ENCODE measurements at regions of chr7 and their contacts with region 1.

Region 1: DNA sequence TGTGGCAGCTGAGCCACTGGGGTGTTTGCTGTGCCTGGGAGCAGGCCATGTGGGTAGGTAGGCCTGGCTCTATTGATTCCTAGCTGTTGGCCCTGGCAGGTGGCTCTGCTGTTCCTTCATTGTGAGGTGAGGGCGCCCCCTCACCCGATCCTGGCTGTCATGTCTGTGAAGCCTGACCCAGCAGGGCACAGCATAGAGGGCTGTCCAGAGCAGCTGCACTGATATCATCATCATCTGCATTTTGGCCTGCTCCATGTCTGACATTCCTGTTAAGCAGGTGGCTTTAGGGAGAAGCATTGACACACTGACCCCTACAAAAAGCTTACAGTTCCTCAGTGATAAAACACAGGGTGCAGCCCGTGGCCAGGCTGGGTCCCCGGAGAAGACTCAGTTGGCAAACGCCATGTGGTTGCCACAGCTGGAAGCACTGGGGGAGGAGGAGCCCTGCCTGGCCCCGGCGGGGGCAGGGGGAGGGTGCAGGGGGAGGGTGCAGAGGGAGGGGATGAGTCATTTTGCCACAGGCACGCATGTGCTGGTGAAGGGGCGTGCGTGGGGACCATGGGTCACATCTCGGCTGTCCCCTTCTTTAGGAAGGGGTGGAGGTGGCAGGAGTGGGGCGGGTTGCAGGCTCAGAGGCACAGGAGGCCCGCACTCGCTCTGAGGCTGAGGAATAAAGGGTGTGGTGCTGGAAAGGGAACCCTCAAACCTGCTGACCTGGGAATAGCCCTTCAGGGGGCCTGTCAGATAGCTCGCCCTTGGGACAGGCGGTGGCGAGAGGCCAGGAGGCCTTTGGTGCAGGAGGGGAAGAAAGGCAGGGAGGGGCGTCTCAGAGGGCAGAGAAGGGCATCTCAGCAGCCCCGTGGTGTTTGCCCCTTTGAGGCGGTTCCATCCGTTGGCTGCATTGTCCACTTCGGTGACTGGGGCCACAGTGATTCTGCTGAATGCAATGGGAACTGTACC is 31.6 kb downstream of the IKZF1 start:
- DNase-seq: peak in 9 of 10 donors; percentile 50 to 88 (median 60)
- ATAC-seq: peak; percentile 9 to 31
- H3K4me3 Mint-ChIP-seq: no peak overlapping the region
- H3K27ac Mint-ChIP-seq: no peak overlapping the region
- H3K4me1 Mint-ChIP-seq: peaks cover 0 to 45% (median 21%) of the 10 kb centered on the region in 4 donors
- H3K27me3 Mint-ChIP-seq: no peaks in the 10 kb centered on the region

Region 2: GRCh38 chr7:50182759-50183158 is 153.3 kb before region 1 on chr7:
- POLR2A ChIA-PET with region 1: no interaction called
- DNase-seq: no peak
- ATAC-seq: no peak
- H3K4me3 Mint-ChIP-seq: no peak overlapping the region
- H3K27ac Mint-ChIP-seq: peak overlapping the region in 1 of 10 donors; percentile 9
- H3K4me1 Mint-ChIP-seq: peaks cover 2 to 13% (median 11%) of the 10 kb centered on the region in 4 donors
- H3K27me3 Mint-ChIP-seq: no peaks in the 10 kb centered on the region

Region 3: DNA sequence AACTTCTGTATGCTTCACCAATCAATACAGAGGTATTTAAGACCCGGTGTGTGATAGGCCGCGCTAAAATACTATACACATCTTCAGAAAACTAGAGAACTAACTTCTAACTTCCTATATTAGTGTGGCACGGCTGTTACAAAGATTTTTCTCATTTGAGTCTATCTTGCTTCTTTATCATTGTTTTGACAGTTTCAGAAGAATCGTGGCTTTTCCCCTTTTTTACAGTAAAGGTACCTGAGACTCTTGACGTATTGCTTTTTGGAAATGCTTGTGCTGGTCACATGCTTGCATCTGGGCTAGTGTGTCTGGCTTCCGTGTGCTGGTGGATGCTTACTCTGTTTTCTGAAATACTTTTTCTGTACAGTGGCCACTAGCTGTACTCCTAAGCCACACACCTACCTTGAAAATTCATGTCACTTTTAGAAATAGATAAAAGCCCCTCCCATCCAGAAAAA is 18.8 kb before region 1 on chr7:
- POLR2A ChIA-PET with region 1: interaction called, 1,553 read pairs
- DNase-seq: peak in 9 of 10 donors; percentile 43 to 89 (median 69)
- ATAC-seq: peak; percentile 66 to 80
- H3K4me3 Mint-ChIP-seq: peak overlapping the region; percentile 81 to 100 (median 100)
- H3K27ac Mint-ChIP-seq: peak overlapping the region in 9 of 10 donors; percentile 91 to 100 (median 99)
- H3K4me1 Mint-ChIP-seq: peaks cover 42 to 99% (median 94%) of the 10 kb centered on the region in 4 donors
- H3K27me3 Mint-ChIP-seq: no peaks in the 10 kb centered on the region

Region 4: GRCh38 chr7:50349963-50350944 is 14.2 kb after region 1 on chr7:
- POLR2A ChIA-PET with region 1: interaction called, 742 read pairs
- DNase-seq: peak in 6 of 10 donors; percentile 40 to 61 (median 53)
- ATAC-seq: peak; percentile 49 to 56
- H3K4me3 Mint-ChIP-seq: peak overlapping the region; percentile 52 to 91 (median 78)
- H3K27ac Mint-ChIP-seq: peak overlapping the region in 9 of 10 donors; percentile 94 to 100 (median 97)
- H3K4me1 Mint-ChIP-seq: peaks cover 60 to 99% (median 98%) of the 10 kb centered on the region in 4 donors
- H3K27me3 Mint-ChIP-seq: peaks cover 0 to 2% (median 0%) of the 10 kb centered on the region in 5 donors

Region 5: GRCh38 chr7:50369143-50370026 is 33.3 kb after region 1 on chr7:
- POLR2A ChIA-PET with region 1: interaction called, 742 read pairs
- DNase-seq: peak in 8 of 10 donors; percentile 49 to 86 (median 72)
- ATAC-seq: peak; percentile 44 to 66
- H3K4me3 Mint-ChIP-seq: peak overlapping the region in 9 of 10 donors; percentile 45 to 82 (median 61)
- H3K27ac Mint-ChIP-seq: peak overlapping the region in 9 of 10 donors; percentile 37 to 100 (median 89)
- H3K4me1 Mint-ChIP-seq: peaks cover 42 to 99% (median 96%) of the 10 kb centered on the region in 4 donors
- H3K27me3 Mint-ChIP-seq: no peaks in the 10 kb centered on the region

Region 6: DNA sequence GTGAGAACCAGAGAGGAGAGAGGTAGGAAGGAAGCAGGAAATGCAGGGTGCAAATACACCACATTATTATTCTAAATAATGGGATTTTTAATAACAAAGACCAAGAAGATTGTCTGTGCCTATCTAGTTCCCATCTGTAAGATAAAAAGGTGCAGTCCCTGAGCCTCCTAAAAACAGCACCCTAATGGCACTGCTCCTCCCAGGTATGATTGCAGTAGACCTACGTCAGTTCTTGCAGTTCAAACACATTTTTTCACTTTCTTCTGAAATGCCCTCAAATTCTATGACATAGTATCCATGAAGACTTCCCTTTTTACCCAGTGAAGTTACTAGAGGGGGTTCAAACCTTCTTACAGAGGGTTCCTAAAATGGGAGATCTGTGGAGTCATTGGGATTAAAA is 43.5 kb after region 1 on chr7:
- POLR2A ChIA-PET with region 1: no interaction called
- DNase-seq: no peak
- ATAC-seq: peak in 1 of 2 donors; percentile 70
- H3K4me3 Mint-ChIP-seq: peak overlapping the region in 5 of 10 donors; percentile 6 to 59 (median 14)
- H3K27ac Mint-ChIP-seq: peak overlapping the region in 9 of 10 donors; percentile 47 to 94 (median 85)
- H3K4me1 Mint-ChIP-seq: peaks cover 31 to 97% (median 95%) of the 10 kb centered on the region in 4 donors
- H3K27me3 Mint-ChIP-seq: no peaks in the 10 kb centered on the region

Region 7: DNA sequence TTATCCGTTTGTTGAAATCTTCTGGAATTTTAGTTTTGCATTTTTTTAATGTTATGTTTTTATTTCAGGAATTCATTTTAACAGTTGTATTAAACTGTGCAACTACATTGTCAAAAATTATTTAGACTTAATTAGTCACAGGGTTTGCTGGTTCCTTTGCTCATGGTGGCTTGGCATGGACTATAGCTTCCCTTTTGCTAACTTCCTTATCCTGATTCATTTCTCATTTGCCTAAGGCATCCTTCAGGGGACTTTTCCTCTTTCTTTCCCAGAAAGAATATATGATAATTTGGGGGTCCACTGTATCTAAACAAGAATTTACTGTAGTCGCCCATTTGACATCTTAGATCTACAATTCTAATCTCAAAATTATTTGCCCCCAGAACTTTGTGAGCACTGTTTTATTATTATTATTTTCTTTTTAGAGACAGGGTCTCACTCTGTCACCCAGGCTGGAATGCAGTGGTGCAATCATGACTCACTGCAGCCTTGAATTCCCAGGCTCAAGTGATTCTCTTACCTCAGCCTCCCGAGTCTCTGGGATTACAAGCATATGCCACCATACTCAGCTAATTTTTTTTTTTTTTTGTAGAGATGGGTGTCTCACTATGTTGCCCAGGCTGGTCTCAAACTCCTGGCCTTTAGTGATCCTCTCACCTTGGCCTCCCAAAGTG is 100.2 kb after region 1 on chr7:
- POLR2A ChIA-PET with region 1: no interaction called
- DNase-seq: no peak
- ATAC-seq: no peak
- H3K4me3 Mint-ChIP-seq: no peak overlapping the region
- H3K27ac Mint-ChIP-seq: no peak overlapping the region
- H3K4me1 Mint-ChIP-seq: peaks cover 0 to 2% (median 0%) of the 10 kb centered on the region in 4 donors
- H3K27me3 Mint-ChIP-seq: no peaks in the 10 kb centered on the region

Region 8: DNA sequence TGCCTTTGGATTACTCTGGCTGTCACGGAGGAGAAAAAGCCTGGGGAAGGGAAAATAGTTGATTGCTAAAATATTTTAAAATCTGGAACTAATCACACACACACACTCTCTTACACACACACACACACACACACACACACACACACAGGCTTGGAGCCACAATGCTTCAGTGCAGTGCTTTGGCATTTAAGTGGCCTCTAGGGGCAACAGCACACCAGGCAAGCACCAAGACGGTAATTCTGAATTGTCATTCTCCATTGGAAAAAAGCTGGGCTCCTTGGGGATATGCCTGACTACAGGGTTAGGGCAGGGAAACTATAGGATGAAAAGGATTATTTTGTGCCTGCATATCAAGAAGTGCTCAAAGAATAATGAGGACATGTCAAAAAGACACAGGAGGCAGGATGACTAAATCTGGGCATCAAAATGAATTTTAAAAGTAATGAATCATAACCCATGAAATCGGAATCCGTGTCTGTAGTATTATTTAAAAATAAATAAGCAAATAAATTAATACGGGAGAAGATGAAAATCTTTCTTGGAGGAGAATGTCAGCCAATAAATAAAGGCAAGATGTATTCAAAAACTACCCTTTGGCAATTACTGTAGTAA is 259.5 kb after region 1 on chr7:
- POLR2A ChIA-PET with region 1: no interaction called
- DNase-seq: no peak
- ATAC-seq: peak in 1 of 2 donors; percentile 30
- H3K4me3 Mint-ChIP-seq: no peak overlapping the region
- H3K27ac Mint-ChIP-seq: peak overlapping the region in 1 of 10 donors; percentile 73
- H3K4me1 Mint-ChIP-seq: peaks cover 0 to 7% (median 0%) of the 10 kb centered on the region in 4 donors
- H3K27me3 Mint-ChIP-seq: peaks cover 0 to 6% (median 0%) of the 10 kb centered on the region in 5 donors

Measured in naive thymus-derived CD8-positive, alpha-beta T cell (primary cell).